Activated CD4-positive, alpha-beta memory T cell treated with anti-CD3 and anti-CD28 coated beads for 36 hours (primary cell): ENCODE measurements at regions of chr5 and their contacts with region 1.

Region 1: DNA sequence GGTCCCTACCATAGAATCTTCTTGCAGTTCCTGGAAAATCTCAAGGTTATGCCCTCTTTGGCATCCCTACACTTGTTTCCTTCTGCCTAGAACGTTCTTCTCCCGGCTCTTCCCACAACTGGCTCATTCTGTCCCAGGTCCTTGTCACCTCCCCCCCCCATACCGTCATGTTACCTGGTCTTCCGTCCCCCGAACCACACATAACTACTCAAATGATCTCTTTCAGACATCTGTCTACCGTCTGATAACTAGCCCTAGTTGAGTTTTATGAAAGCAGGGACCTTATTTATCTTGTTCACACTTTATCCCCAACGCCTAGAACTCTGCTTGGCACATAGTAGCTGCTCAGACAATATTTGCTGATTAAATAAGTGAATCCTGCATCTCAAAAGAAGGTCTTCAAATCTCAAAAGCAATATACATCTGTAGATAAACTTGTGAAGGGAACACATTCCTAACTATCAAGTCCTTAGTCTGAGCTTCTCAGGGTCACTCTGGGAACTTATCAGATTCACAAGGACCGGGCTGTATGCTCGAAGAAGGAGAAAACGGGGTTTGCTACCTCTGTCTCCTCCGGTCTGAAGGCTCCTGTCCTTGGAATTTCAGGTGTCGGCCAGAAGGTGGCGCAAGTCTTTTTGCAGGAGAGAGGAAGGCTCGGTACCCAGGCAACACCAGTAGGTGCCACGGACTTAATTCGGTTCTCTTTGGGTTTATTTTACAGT is 30.0 kb downstream of the LCP2 start:
- DNase-seq: peak; percentile 87
- H3K4me3 Mint-ChIP-seq: peak overlapping the region; percentile 60
- H3K27ac Mint-ChIP-seq: peak overlapping the region; percentile 85
- H3K4me1 Mint-ChIP-seq: peaks cover 87% of the 10 kb centered on the region
- H3K27me3 Mint-ChIP-seq: no peaks in the 10 kb centered on the region

Region 2: GRCh38 chr5:170253844-170254455 is 13.6 kb before region 1 on chr5:
- CTCF ChIA-PET with region 1: interaction called, 3 read pairs
- POLR2A ChIA-PET with region 1: interaction called, 3 read pairs
- intact Hi-C with region 1: loop called (anchors 1 kb)
- DNase-seq: peak; percentile 80
- H3K4me3 Mint-ChIP-seq: no peak overlapping the region
- H3K27ac Mint-ChIP-seq: peak overlapping the region; percentile 73
- H3K4me1 Mint-ChIP-seq: peaks cover 57% of the 10 kb centered on the region
- H3K27me3 Mint-ChIP-seq: no peaks in the 10 kb centered on the region

Region 3: GRCh38 chr5:170287532-170287931 is 19.9 kb after region 1 on chr5:
- CTCF ChIA-PET with region 1: interaction called, 137 read pairs
- POLR2A ChIA-PET with region 1: interaction called, 113 read pairs
- intact Hi-C with region 1: no loop called
- DNase-seq: peak; percentile 47
- H3K4me3 Mint-ChIP-seq: no peak overlapping the region
- H3K27ac Mint-ChIP-seq: peak overlapping the region; percentile 99
- H3K4me1 Mint-ChIP-seq: peaks cover 100% of the 10 kb centered on the region
- H3K27me3 Mint-ChIP-seq: no peaks in the 10 kb centered on the region

Region 4: GRCh38 chr5:170312666-170313065 is 45.1 kb after region 1 on chr5:
- CTCF ChIA-PET with region 1: interaction called, 19 read pairs
- POLR2A ChIA-PET with region 1: interaction called, 6 read pairs
- intact Hi-C with region 1: loop called (anchors 2 kb)
- DNase-seq: peak; percentile 88
- H3K4me3 Mint-ChIP-seq: peak overlapping the region; percentile 79
- H3K27ac Mint-ChIP-seq: peak overlapping the region; percentile 95
- H3K4me1 Mint-ChIP-seq: peaks cover 51% of the 10 kb centered on the region
- H3K27me3 Mint-ChIP-seq: no peaks in the 10 kb centered on the region